Activated CD4-positive, alpha-beta T cell treated with anti-CD3 and anti-CD28 coated beads, Interleukin-2, amount 10 ng/mL, durations not matched to agents 24 days and 14 days (primary cell): ENCODE measurements at regions of chr5 and their contacts with region 1.

Region 1: DNA sequence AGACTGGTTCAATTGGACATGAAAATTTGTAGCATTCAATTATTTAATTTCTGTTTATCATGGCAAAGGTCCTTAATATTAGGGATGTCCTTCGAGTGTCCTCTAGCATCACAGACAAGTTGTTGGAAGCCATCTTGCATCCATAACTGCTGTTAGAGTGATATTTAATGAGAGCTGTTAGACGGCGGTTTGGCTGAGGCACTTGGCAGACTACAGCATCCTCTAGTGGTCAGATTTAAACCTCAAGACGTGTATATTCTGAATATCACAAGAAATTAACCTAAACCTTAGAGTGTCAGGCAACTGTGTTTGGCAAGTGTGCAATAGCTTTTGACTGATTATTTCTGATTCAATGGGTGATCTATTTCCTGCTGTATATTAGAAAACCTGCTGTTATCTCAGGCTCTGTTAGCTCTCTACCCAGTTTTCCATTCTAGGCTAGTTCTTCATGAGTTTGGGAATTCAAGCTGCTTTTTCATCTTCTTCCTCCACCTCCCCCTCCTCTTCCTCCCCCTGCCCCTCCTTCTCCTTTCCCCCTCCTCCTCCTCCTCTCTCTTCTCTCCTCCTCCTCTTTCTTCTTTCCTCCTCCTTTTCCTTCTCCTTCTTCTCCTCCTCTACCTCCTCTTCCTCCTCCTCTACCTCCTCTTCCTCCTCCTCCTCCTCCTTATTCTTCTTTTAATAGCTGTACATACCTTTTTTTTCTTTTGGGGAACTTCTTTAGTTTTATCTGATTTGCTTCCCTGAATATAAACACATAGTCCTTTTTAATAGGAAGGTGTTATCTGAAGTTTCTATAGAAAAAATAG is 8.6 kb downstream of the SPINK1 start:
- DNase-seq: peak; percentile 82
- H3K4me3 Mint-ChIP-seq: no peak overlapping the region
- H3K27ac Mint-ChIP-seq: no peak overlapping the region
- H3K4me1 Mint-ChIP-seq: no peaks in the 10 kb centered on the region
- H3K27me3 Mint-ChIP-seq: peaks cover 14% of the 10 kb centered on the region

Region 2: DNA sequence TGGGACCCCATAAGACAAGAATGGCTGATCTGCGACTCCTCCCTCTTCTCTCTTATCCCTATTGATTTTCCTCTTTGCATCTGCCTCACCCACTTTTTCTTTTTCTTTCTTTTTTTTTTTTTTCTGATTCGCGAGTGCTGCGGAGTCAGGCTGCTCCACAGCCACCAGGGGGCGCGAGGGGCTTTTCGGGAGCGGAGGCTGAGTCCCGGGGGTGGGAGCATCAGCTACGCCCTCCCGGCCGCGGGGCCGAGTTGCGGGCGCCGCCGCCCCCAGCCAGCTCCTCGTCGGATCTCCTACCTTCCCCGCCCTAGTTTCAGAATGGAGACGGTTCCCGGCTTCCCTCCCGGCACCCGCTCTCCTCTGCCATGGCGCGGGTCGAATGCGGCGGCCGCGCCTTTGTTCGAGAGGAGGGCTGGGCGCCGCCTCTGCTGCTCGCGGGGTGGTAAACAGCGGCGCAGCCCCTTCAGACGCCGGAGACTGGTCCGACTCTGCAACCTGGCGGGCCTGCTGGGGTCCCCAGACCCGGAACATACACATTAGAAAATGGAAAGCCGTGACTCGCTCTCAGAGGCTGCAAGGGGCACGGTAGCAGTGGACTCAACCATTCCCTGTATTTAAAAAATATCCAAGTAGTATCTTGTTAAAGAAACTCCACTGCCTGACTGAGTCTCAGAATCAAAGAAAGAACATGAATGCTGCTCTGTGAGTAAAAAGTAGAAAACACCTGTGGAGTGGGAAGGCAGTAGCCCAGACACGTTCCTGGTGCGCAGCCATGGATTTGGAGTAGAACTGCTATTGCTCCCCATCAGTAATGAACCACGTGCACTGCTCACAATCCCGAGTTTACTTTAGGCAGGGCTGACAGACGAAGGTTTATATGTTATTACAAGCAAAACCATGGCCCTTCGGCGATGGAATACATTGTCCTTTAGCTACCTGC is 368.7 kb before region 1 on chr5:
- intact Hi-C with region 1: loop called (anchors 1 kb)
- DNase-seq: peak; percentile 92
- H3K4me3 Mint-ChIP-seq: peak overlapping the region; percentile 81
- H3K27ac Mint-ChIP-seq: peak overlapping the region; percentile 20
- H3K4me1 Mint-ChIP-seq: peaks cover 7% of the 10 kb centered on the region
- H3K27me3 Mint-ChIP-seq: peaks cover 53% of the 10 kb centered on the region

Region 3: DNA sequence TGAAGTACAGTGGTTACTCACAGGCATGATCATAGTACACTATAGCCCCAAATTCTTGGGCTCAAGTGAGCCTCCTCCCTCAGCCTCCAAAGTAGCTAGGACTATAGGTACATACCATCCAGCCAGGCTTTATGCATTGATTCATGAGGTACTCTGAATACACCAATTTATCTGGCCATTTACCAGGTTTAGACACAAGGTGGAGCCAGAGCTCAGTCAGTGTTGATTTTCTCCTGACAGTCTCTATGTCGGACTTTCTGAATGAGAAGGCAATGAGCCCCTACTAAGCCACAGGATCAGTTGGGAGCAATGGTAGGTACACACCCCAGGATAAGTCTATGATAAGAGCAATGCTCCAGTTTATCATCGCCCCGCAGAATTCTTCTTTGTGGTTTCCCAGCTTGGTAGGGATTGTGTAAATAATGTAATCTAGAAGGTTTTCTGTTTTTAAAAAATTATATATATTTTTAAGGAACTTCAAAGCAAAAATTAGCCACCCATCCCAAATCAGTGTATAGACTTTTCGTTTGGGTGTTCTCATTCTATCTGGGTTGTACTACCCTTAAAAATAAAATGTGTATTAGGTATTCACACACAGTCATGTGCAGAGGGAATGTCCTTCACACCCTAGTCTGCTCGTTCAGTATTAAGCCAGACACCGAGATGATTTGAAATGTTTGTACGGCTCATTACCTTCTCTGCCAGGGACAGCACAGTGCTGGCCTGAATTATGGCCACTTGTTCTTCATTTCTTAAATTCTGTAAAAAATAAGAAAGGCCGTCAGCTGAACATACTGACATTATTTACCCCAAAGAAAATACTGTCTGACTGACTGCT is 194.6 kb before region 1 on chr5:
- intact Hi-C with region 1: loop called (anchors 1 kb)
- DNase-seq: peak; percentile 89
- H3K4me3 Mint-ChIP-seq: no peak overlapping the region
- H3K27ac Mint-ChIP-seq: no peak overlapping the region
- H3K4me1 Mint-ChIP-seq: no peaks in the 10 kb centered on the region
- H3K27me3 Mint-ChIP-seq: no peaks in the 10 kb centered on the region

Region 4: DNA sequence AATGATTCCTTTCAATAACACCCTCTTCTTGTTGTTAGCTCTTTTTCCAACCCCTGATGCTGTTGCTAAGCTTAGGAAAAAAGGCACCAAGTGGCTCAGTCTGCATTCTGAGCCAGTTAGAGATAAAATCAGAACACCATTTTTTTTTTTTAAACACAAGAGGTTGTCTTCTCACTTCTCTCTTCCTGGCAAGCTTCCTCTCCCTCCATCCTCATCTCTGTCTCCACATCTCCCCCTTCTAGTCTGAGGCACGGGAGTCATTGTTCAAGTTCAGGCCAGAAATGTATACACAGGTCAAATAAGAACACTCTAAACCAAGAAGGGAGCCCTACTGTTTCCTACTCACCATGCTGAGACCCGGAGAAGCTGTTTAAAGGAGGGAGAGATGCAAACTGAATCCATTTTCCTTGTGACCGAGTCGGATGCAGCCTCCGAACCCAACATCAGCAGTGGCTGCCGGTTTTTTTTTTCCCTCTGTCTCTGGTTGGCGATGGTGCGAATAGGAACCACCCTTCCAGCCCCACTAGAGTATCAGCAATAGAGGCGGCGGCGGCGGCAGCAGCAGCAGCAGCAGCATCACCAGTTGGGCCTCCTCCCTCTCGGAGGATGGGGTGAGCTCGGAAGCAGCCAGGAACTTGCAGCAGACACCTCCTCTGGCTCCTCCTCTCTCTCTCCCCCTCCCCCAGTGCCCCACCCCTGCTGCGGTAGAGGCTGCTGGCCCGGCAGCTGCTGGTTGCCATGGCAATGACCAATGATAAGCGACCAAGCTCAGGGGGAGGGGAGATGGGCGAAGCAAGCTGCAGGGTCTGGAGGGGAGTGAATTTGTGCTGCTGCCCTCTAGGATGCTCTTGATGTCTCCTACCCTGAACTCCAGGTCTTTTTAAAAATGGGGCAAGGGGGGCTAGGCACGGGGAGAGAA is 40.5 kb before region 1 on chr5 and contains the start of gene JAKMIP2:
- intact Hi-C with region 1: no loop called
- DNase-seq: peak; percentile 95
- H3K4me3 Mint-ChIP-seq: peak within 1 kb of the TSS; percentile 82
- H3K27ac Mint-ChIP-seq: peak within 1 kb of the TSS; percentile 67
- H3K4me1 Mint-ChIP-seq: peaks cover 9% of the 10 kb centered on the region
- H3K27me3 Mint-ChIP-seq: peaks cover 8% of the 10 kb centered on the region
- total RNA-seq, gene JAKMIP2: 1.2 and 1.6 TPM in 2 replicates

Region 5: GRCh38 chr5:147930769-147931168 is 107.9 kb after region 1 on chr5:
- intact Hi-C with region 1: no loop called
- DNase-seq: no peak
- H3K4me3 Mint-ChIP-seq: no peak overlapping the region
- H3K27ac Mint-ChIP-seq: no peak overlapping the region
- H3K4me1 Mint-ChIP-seq: no peaks in the 10 kb centered on the region
- H3K27me3 Mint-ChIP-seq: no peaks in the 10 kb centered on the region